ENCODE measurements at regions of chr22 and their contacts with region 1.

Region 1: GRCh38 chr22:30968924-30969539 is at the start of gene TUG1:
- DNase-seq: peak; percentile 99
- H3K4me3 ChIP-seq: peak within 1 kb of the TSS; percentile 80 to 95 (median 88)
- H3K27ac ChIP-seq: peak within 1 kb of the TSS; percentile 83
- H3K4me1 ChIP-seq: peaks cover 23% of the 10 kb centered on the region
- H3K27me3 ChIP-seq: no peaks in the 10 kb centered on the region
- CTCF ChIP-seq: no peak
- POLR2A ChIP-seq: peak; percentile 58
- total RNA-seq, gene TUG1: 76.8 and 85.9 TPM in 2 replicates

Region 2: DNA sequence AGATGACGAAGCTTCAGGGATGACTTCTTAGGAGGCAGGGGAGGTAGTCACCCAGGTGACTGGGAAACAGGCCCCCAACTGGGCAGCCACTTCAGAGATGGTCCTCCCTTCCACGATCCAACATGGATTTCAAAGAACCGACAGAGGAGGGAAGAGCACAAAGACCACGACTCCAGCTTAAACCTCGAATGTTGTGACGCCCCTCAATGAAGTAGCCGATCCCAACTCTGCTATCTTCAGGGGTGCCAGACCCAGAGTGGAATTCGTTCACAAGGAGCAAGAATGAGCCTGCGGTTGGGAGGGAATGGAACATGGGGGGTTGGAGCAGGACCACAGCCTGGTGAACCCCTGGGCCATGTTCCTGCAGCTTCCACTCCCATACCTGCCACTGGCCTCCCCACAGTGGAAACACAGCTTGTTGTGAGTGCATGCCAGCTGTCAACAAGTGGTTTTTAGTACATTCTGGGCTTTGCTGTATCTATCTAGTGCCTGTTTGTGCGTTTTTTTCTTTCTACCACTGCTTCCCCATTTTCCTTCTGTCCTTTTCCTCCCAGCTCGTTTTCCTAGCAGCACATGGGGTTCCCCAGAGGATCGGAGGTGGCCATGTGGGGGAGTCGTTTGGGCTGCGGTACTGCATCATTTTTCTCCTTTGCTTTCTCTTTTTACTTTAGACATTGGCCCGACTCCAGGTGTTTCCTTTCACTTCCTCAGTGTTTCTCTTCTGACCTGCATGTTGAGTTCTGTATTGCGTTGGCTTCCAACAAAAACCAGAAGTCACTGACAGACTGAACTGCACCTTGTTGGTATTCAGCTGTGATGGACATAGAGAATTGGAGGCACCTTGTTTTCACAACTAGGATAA is 66.3 kb before region 1 on chr22:
- CTCF ChIA-PET with region 1: no interaction called
- POLR2A ChIA-PET with region 1: no interaction called
- dilution Hi-C with region 1: no loop called
- intact Hi-C with region 1: no loop called
- DNase-seq: no peak
- H3K4me3 ChIP-seq: no peak overlapping the region
- H3K27ac ChIP-seq: no peak overlapping the region
- H3K4me1 ChIP-seq: no peaks in the 10 kb centered on the region
- H3K27me3 ChIP-seq: no peaks in the 10 kb centered on the region
- CTCF ChIP-seq: no peak
- POLR2A ChIP-seq: no peak

Region 3: DNA sequence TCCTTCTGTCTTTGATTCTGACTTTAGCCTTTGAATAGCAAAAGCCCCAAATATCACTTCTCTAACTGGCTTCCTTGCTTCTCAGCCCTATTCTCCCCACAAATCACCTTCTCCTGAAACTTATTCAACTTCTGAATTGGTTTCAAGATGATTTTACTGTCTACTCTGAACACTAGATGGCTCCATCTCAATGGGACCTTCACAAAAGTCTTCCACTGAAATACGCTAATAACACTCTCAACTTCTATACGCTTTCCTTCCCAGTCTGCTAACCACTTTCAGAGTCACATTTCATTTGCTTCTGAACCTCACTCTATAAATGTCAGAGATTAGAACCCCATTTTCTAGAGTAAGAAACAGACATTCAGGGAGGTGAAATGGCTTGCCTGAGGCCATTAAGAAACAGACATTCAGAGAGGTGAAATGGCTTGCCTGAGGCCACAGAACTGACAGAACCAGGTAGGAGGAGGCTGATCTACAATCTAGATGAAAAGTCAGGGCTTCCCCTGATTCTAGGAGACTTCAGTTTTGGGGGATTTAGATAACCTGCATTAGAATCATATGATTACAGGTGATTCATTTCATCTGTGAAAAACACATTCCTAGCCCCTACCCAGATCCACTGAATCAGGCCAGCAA is 21.1 kb before region 1 on chr22:
- CTCF ChIA-PET with region 1: interaction called, 20 read pairs
- POLR2A ChIA-PET with region 1: no interaction called
- dilution Hi-C with region 1: no loop called
- intact Hi-C with region 1: no loop called
- DNase-seq: peak; percentile 63
- H3K4me3 ChIP-seq: no peak overlapping the region
- H3K27ac ChIP-seq: no peak overlapping the region
- H3K4me1 ChIP-seq: no peaks in the 10 kb centered on the region
- H3K27me3 ChIP-seq: no peaks in the 10 kb centered on the region
- CTCF ChIP-seq: peak; percentile 16 to 40
- POLR2A ChIP-seq: no peak

Region 4: GRCh38 chr22:30989474-30989873 is 20.4 kb after region 1 on chr22:
- CTCF ChIA-PET with region 1: no interaction called
- POLR2A ChIA-PET with region 1: no interaction called
- dilution Hi-C with region 1: no loop called
- intact Hi-C with region 1: no loop called
- DNase-seq: no peak
- H3K4me3 ChIP-seq: no peak overlapping the region
- H3K27ac ChIP-seq: no peak overlapping the region
- H3K4me1 ChIP-seq: no peaks in the 10 kb centered on the region
- H3K27me3 ChIP-seq: peaks cover 0 to 3% of the 10 kb centered on the region in 2 experiments
- CTCF ChIP-seq: no peak
- POLR2A ChIP-seq: no peak

Region 5: GRCh38 chr22:31046539-31047226 is 77.7 kb after region 1 on chr22:
- CTCF ChIA-PET with region 1: interaction called, 8 read pairs
- POLR2A ChIA-PET with region 1: interaction called, 4 read pairs
- dilution Hi-C with region 1: no loop called
- intact Hi-C with region 1: loop called (anchors 1 kb)
- DNase-seq: peak; percentile 93
- H3K4me3 ChIP-seq: no peak overlapping the region
- H3K27ac ChIP-seq: peak overlapping the region; percentile 79
- H3K4me1 ChIP-seq: peaks cover 32% of the 10 kb centered on the region
- H3K27me3 ChIP-seq: no peaks in the 10 kb centered on the region
- CTCF ChIP-seq: no peak
- POLR2A ChIP-seq: no peak